ENCODE measurements at regions of chr5 and their contacts with region 1.

Region 1: GRCh38 chr5:122192497-122193496 is 63.5 kb downstream of the ZNF474 start:
- ATAC-seq: peak; percentile 67 to 94 (median 82)
- H3K4me3 ChIP-seq: no peak overlapping the region
- H3K27ac ChIP-seq: no peak overlapping the region
- H3K4me1 ChIP-seq: peaks cover 0 to 3% of the 10 kb centered on the region in 2 donors

Region 2: DNA sequence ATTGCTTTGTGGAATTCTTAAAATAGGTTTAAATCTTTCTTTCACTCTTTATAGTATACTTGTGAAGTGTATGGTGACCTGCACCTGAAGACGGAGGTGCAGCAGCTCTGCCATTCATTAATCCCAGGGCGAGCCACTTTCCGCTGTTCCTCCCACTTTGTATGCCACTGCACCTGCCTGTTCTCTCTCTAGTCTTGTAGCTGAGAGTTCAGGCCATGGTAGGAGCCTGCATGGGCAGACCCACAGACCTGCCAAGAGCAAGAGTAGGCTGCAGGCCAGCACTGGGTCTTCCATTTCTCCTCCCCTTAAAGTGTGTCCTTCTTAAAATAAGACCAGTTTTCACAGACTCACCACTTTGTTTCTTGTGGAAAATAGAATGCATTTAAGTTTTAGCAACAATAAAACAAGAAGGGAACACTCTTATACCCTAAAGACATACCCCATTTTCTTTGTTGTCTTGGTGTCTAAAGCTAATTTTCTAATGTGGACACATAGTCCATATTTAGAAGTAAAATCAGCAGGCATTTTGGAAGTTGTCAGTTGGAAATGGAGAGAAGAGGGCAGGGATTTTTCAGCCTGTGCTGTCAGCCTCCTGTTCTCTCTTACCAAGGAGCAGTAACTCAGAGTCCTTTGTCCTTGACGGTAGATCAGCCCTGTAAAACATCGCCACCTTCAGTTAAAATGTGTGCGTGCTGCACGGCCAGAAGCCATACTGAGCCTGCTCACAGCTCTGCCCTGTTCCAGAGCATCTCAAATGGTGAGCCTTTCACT is 222.4 kb after region 1 on chr5:
- in situ Hi-C with region 1: loop called (anchors 5 to 25 kb)
- ATAC-seq: peak; percentile 96 to 100 (median 100)
- H3K4me3 ChIP-seq: no peak overlapping the region
- H3K27ac ChIP-seq: no peak overlapping the region
- H3K4me1 ChIP-seq: peaks cover 7 to 9% of the 10 kb centered on the region in 2 donors

Region 3: GRCh38 chr5:122498163-122498562 is 305.4 kb after region 1 on chr5:
- in situ Hi-C with region 1: loop called in 1 of 9 experiments (anchors 10 kb)
- ATAC-seq: peak in 5 of 8 experiments; percentile 31 to 57 (median 52)
- H3K4me3 ChIP-seq: no peak overlapping the region
- H3K27ac ChIP-seq: no peak overlapping the region
- H3K4me1 ChIP-seq: peaks cover 0 to 10% of the 10 kb centered on the region in 2 donors